Activated T-helper 1 cell treated with anti-CD3 and anti-CD28 coated beads, Interleukin-12 subunit alpha, Interleukin-12 subunit beta, Interleukin-2, Interleukin-4 antibody, amounts not matched to agents 30 ng/mL and 10 ng/mL and 1 ng/mL, durations not matched to agents 14 hours and 24 hours and 36 hours (primary cell): ENCODE measurements at regions of chr14 and their contacts with region 1.

Region 1: DNA sequence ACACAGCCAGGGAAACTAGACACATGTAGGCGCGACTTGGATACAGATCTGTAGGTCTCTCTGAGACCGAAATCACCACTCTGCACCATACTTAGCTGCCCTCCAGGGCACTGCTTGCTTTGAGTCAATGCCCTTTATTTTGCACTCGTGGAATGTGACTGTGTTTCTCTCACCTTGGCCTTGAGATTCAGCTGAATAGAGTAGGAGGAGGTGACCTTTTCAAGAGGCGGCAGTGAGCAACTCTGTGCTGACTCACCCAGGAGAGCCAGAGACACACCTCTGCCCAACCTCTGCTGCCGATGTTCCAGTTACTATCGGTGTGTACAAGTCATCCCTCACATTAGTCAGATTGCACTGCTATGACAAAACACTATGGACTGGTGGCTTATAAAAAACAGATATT is 583.4 kb downstream of the VRK1 start:
- DNase-seq: peak; percentile 22
- H3K4me3 Mint-ChIP-seq: peak overlapping the region; percentile 25
- H3K27ac Mint-ChIP-seq: peak overlapping the region; percentile 14
- H3K4me1 Mint-ChIP-seq: peaks cover 52% of the 10 kb centered on the region
- H3K27me3 Mint-ChIP-seq: no peaks in the 10 kb centered on the region

Region 2: GRCh38 chr14:97120611-97121031 is 259.9 kb before region 1 on chr14:
- intact Hi-C with region 1: loop called (anchors 1 kb)
- DNase-seq: peak; percentile 50
- H3K4me3 Mint-ChIP-seq: peak overlapping the region; percentile 63
- H3K27ac Mint-ChIP-seq: peak overlapping the region; percentile 89
- H3K4me1 Mint-ChIP-seq: peaks cover 27% of the 10 kb centered on the region
- H3K27me3 Mint-ChIP-seq: no peaks in the 10 kb centered on the region

Region 3: GRCh38 chr14:97306760-97307246 is 73.7 kb before region 1 on chr14:
- intact Hi-C with region 1: loop called (anchors 2 kb)
- DNase-seq: no peak
- H3K4me3 Mint-ChIP-seq: peak overlapping the region; percentile 9
- H3K27ac Mint-ChIP-seq: peak overlapping the region; percentile 81
- H3K4me1 Mint-ChIP-seq: peaks cover 28% of the 10 kb centered on the region
- H3K27me3 Mint-ChIP-seq: no peaks in the 10 kb centered on the region

Region 4: GRCh38 chr14:97350894-97351731 is 29.4 kb before region 1 on chr14:
- intact Hi-C with region 1: no loop called
- DNase-seq: no peak
- H3K4me3 Mint-ChIP-seq: no peak overlapping the region
- H3K27ac Mint-ChIP-seq: no peak overlapping the region
- H3K4me1 Mint-ChIP-seq: no peaks in the 10 kb centered on the region
- H3K27me3 Mint-ChIP-seq: no peaks in the 10 kb centered on the region

Region 5: DNA sequence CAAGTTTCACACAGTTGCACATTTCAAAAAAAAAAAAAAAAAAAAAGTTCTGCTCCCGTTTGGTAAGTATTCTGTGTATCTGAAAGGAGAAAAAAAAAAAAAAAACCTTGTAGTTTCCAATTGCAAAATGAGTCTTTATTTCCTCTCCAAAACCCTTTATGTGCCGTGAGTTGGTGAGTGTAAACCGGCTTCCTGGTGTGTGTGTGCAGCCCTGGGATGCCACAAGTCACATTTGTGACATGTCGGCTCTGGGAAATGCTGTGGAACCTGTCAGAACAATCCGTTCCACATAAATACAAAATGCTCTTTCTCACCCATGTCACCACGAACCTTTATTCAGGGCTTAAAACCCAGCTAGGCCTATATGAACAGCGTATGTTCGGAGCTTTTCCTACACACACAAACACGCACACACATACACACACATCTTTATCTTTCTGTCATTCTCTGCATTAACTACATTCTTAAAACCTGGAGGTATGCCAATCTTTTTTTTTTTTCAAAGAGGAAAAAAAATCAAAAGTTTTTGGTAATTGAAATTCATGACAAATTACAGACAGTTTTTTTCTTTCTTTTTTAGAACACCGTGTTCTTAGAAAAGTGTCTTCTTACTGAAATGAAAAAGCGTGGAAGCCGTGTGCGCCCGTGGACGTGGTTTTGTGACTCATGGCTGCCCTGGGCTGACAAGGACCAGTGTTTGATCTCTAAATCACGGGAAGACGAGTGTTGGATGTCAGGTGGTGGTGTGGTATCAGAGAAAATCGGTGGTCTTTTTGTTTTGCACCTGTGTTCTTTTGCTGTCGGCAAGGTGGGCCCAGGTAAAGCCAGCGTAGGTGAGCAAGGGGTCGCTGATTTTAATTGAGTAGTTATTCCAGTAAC is 28.6 kb after region 1 on chr14:
- intact Hi-C with region 1: loop called (anchors 1 kb)
- DNase-seq: peak; percentile 24
- H3K4me3 Mint-ChIP-seq: peak overlapping the region; percentile 68
- H3K27ac Mint-ChIP-seq: peak overlapping the region; percentile 88
- H3K4me1 Mint-ChIP-seq: peaks cover 32% of the 10 kb centered on the region
- H3K27me3 Mint-ChIP-seq: peaks cover 4% of the 10 kb centered on the region

Region 6: DNA sequence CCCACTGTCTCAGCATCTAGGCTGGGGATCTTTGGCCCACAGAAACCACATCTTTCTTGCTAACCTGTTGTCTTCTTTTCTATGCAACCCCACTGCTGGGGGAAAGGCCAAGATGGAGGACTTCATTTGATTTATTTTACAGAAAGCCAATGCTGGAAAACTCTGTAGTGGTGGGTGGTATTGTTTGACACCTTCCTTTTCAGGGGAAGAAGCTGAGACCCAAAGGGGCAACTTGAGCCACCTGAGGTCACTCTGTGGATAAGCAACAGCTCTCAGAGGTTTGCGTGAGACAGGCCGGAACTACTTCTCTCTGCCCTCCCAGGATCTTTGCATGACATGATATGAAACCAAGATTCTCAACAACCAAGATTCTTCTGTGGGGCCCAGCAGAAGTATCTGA is 61.8 kb after region 1 on chr14:
- intact Hi-C with region 1: loop called (anchors 1 kb)
- DNase-seq: peak; percentile 26
- H3K4me3 Mint-ChIP-seq: peak overlapping the region; percentile 61
- H3K27ac Mint-ChIP-seq: peak overlapping the region; percentile 90
- H3K4me1 Mint-ChIP-seq: peaks cover 36% of the 10 kb centered on the region
- H3K27me3 Mint-ChIP-seq: no peaks in the 10 kb centered on the region

Region 7: GRCh38 chr14:97620066-97620465 is 239.5 kb after region 1 on chr14:
- intact Hi-C with region 1: loop called (anchors 1 kb)
- DNase-seq: no peak
- H3K4me3 Mint-ChIP-seq: peak overlapping the region; percentile 79
- H3K27ac Mint-ChIP-seq: peak overlapping the region; percentile 56
- H3K4me1 Mint-ChIP-seq: peaks cover 47% of the 10 kb centered on the region
- H3K27me3 Mint-ChIP-seq: peaks cover 4% of the 10 kb centered on the region

Region 8: DNA sequence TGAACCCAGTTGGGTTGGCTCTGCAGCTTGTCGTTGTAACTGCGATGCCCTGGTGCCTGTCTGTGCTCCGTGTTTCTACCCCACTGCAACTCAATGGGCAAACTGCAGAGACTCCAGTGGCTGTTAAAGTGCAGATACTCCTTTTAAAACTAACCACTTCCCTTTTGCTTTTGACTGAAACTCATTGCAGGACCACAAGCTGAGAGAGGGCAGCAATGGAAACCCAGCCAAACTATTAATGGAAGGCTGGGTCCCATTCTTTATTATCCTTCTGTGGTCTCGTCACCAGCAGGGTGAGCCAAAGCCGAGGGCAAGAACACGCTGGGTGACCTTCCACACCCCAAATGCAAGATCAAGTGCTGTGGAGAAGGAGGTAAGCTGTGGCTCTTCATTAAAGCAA is 327.1 kb after region 1 on chr14:
- intact Hi-C with region 1: loop called (anchors 5 kb)
- DNase-seq: no peak
- H3K4me3 Mint-ChIP-seq: peak overlapping the region; percentile 9
- H3K27ac Mint-ChIP-seq: no peak overlapping the region
- H3K4me1 Mint-ChIP-seq: peaks cover 79% of the 10 kb centered on the region
- H3K27me3 Mint-ChIP-seq: no peaks in the 10 kb centered on the region

Region 9: GRCh38 chr14:98244162-98244948 is 863.8 kb after region 1 on chr14:
- intact Hi-C with region 1: no loop called
- DNase-seq: no peak
- H3K4me3 Mint-ChIP-seq: no peak overlapping the region
- H3K27ac Mint-ChIP-seq: no peak overlapping the region
- H3K4me1 Mint-ChIP-seq: no peaks in the 10 kb centered on the region
- H3K27me3 Mint-ChIP-seq: peaks cover 2% of the 10 kb centered on the region